ENCODE measurements at regions of chr12 and their contacts with region 1.

Region 1: DNA sequence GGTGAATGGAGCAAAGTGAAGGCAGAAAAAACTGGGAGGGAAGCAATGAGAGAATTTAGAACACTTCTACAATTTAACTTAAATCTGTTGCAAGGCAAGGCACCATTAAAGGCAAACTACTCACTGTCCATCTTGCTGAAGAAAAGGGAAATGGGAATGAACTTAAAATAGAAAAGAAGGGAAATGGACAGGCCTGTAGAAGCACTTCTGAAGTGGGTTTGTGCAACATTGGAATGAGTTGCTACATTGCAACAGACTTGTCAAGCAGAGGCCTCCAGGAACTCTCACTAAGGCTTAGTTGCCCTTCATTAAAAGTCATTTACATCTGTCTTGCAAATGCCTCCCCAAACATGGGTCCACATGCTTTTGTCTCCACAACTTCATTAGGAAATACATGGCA is 13.7 kb upstream of the OR10AD1 start:
- DNase-seq: peak; percentile 61 to 82 (median 75)
- H3K4me3 ChIP-seq: peak overlapping the region in 1 of 3 experiments; percentile 57
- H3K4me3 Mint-ChIP-seq: no peak overlapping the region
- H3K27ac ChIP-seq: peak overlapping the region in 1 of 2 donors; percentile 74
- H3K27ac Mint-ChIP-seq: peak overlapping the region in 3 of 7 donors; percentile 80 to 82 (median 80)
- H3K4me1 ChIP-seq: peaks cover 56 to 63% of the 10 kb centered on the region in 2 donors
- H3K4me1 Mint-ChIP-seq: peaks cover 41% of the 10 kb centered on the region
- H3K27me3 ChIP-seq: no peaks in the 10 kb centered on the region
- H3K27me3 Mint-ChIP-seq: no peaks in the 10 kb centered on the region
- CTCF ChIP-seq: no peak

Region 2: GRCh38 chr12:48286665-48287064 is 69.9 kb after region 1 on chr12:
- intact Hi-C with region 1: loop called (anchors 10 kb)
- DNase-seq: peak in 2 of 3 donors; percentile 11 to 16
- H3K4me3 ChIP-seq: no peak overlapping the region
- H3K4me3 Mint-ChIP-seq: no peak overlapping the region
- H3K27ac ChIP-seq: peak overlapping the region in 1 of 2 donors; percentile 43
- H3K27ac Mint-ChIP-seq: peak overlapping the region in 5 of 7 donors; percentile 75 to 92 (median 86)
- H3K4me1 ChIP-seq: peaks cover 49 to 53% of the 10 kb centered on the region in 2 donors
- H3K4me1 Mint-ChIP-seq: peaks cover 53% of the 10 kb centered on the region
- H3K27me3 ChIP-seq: no peaks in the 10 kb centered on the region
- H3K27me3 Mint-ChIP-seq: peaks cover 2 to 4% (median 3%) of the 10 kb centered on the region in 3 donors
- CTCF ChIP-seq: peak; percentile 55

Measured in CD14-positive monocyte (primary cell).